ENCODE measurements at regions of chr17 and their contacts with region 1.

Region 1: DNA sequence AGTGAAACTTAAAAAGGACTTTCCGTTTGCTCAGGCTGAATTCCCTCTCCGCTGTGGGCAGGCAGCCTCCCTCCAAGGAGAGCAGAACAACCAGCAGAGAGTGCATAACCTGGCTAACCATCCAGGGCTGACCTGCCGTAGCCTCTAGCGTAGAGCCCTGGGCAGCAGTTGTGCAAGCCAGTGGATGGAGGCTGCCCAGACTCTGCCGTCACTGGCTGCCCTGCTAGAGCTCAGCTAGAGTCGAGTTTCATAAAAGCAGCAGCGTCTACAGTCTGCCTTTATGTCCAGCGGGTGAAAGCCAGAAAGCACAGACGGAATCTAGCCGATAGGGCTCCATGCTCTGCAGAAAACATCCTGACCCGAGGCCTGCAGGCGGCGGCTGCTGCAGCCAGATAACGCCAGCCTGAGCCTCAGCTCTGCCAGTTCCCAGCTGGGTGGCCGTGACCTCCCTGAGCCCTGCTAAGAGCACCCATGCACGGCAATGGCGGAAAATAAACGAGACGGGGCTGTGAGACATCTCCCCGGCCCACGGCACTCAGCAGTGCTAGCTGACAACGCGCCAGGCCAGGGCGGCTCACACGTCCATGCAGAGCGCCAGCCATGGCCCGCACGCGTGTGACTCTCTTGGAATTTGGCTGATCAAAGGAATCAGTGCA is 231.3 kb downstream of the ENGASE start:
- DNase-seq: peak; percentile 65 to 86
- ATAC-seq: peak; percentile 86 to 90
- H3K4me3 ChIP-seq: peak overlapping the region in 2 of 4 donors; percentile 3 to 31
- H3K27ac ChIP-seq: peak overlapping the region; percentile 71 to 94 (median 82)
- H3K4me1 ChIP-seq: peaks cover 30 to 38% of the 10 kb centered on the region in 2 donors
- H3K27me3 ChIP-seq: peaks cover 0 to 2% (median 0%) of the 10 kb centered on the region in 3 donors
- CTCF ChIP-seq: peak in 1 of 5 experiments; percentile 29
- POLR2A ChIP-seq: no peak

Region 2: DNA sequence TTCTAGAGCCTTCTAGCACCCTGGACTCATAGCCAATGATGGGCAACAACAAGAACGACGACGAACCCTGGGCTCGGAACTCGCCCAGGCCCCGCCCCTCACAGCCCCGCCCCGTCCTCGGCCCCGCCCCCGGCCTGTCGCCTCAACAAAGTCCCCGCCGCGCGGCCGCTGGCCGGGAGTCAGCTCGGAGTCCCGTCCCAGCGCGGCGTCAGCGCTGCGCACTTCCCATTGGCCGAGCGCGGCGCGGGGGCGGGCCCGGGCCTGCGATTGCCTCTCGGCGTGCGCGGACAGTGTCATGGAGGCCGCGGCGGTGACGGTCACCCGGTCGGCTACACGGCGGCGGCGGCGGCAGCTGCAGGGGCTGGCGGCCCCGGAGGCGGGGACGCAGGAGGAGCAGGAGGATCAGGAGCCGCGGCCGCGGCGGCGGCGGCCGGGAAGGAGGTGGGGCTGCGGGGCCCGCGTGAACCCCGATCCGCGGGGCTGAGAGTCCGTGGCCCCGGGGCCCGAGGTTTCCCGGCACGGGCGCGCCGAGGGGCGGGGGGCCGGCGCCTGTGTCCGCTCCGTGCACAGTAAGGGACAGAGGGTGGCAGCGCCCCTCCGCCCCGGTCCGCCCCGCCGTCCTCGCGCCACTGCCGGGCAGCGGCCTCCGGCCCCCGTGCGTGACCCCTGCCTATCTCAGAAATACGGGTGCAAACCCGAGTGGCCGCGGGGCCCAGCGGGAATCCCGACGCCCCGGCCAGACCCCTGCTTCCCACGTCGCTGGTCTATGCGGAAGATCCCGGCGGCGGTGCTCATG is 231.0 kb before region 1 on chr17 and contains the start of gene ENGASE:
- in situ Hi-C with region 1: no loop called
- intact Hi-C with region 1: loop called (anchors 10 kb)
- DNase-seq: peak; percentile 89 to 93
- ATAC-seq: peak; percentile 83 to 89
- H3K4me3 ChIP-seq: peak within 1 kb of the TSS; percentile 73 to 88 (median 76)
- H3K27ac ChIP-seq: peak within 1 kb of the TSS; percentile 87 to 98 (median 93)
- H3K4me1 ChIP-seq: peaks cover 32 to 38% of the 10 kb centered on the region in 2 donors
- H3K27me3 ChIP-seq: no peaks in the 10 kb centered on the region
- CTCF ChIP-seq: no peak
- POLR2A ChIP-seq: peak; percentile 83 to 86
- total RNA-seq, gene ENGASE: 5.1 to 14.2 (median 9.3) TPM

Measured in gastrocnemius medialis (tissue), 4 donors.